Naive thymus-derived CD4-positive, alpha-beta T cell (primary cell): ENCODE measurements at regions of chr1 and their contacts with region 1.

Region 1: GRCh38 chr1:84143796-84144565 is at the start of gene PRKACB:
- DNase-seq: peak in 7 of 9 donors; percentile 59 to 79 (median 70)
- ATAC-seq: peak; percentile 94
- H3K4me3 ChIP-seq: peak within 1 kb of the TSS; percentile 71
- H3K4me3 Mint-ChIP-seq: peak within 1 kb of the TSS; percentile 88 to 100 (median 96)
- H3K27ac ChIP-seq: peak within 1 kb of the TSS; percentile 74
- H3K27ac Mint-ChIP-seq: peak within 1 kb of the TSS; percentile 97 to 100 (median 99)
- H3K4me1 ChIP-seq: peaks cover 27 to 33% of the 10 kb centered on the region in 2 donors
- H3K4me1 Mint-ChIP-seq: peaks cover 17 to 51% (median 39%) of the 10 kb centered on the region in 7 donors
- H3K27me3 ChIP-seq: no peaks in the 10 kb centered on the region
- H3K27me3 Mint-ChIP-seq: no peaks in the 10 kb centered on the region
- total RNA-seq, gene PRKACB: 71.1 to 176 (median 89.3) TPM

Region 2: DNA sequence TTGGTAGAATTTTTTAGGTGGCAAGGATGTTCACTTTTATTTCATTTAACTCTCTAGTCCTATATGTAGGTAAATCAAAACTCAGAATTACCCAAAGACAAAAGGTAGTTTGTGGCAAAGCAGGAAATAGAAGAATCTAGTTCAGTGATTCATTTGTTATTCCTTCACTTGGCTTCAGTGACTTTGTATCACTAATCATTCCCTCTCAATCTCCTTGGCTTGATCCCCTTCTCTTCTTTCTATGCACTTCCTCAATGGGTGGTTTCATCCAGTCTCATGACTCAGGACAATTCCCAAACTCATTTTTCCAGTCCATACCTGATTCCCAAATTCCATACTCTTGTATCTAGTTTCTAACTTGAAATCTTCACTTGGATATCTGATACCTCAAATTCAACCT is 65.0 kb after region 1 on chr1:
- CTCF ChIA-PET with region 1: interaction called, 3 read pairs
- POLR2A ChIA-PET with region 1: no interaction called
- intact Hi-C with region 1: loop called in 1 of 2 experiments (anchors 2 kb)
- DNase-seq: no peak
- ATAC-seq: no peak
- H3K4me3 ChIP-seq: no peak overlapping the region
- H3K4me3 Mint-ChIP-seq: no peak overlapping the region
- H3K27ac ChIP-seq: no peak overlapping the region
- H3K27ac Mint-ChIP-seq: peak overlapping the region in 6 of 9 donors; percentile 7 to 87 (median 19)
- H3K4me1 ChIP-seq: no peaks in the 10 kb centered on the region
- H3K4me1 Mint-ChIP-seq: peaks cover 4 to 55% (median 38%) of the 10 kb centered on the region in 7 donors
- H3K27me3 ChIP-seq: no peaks in the 10 kb centered on the region
- H3K27me3 Mint-ChIP-seq: no peaks in the 10 kb centered on the region

Region 3: GRCh38 chr1:84442256-84442655 is 298.3 kb after region 1 on chr1:
- CTCF ChIA-PET with region 1: interaction called, 167 read pairs
- POLR2A ChIA-PET with region 1: interaction called, 105 read pairs
- intact Hi-C with region 1: no loop called
- DNase-seq: peak in 7 of 9 donors; percentile 51 to 77 (median 66)
- ATAC-seq: peak; percentile 99
- H3K4me3 ChIP-seq: no peak overlapping the region
- H3K4me3 Mint-ChIP-seq: peak overlapping the region; percentile 14 to 66 (median 41)
- H3K27ac ChIP-seq: no peak overlapping the region
- H3K27ac Mint-ChIP-seq: peak overlapping the region in 5 of 9 donors; percentile 35 to 81 (median 72)
- H3K4me1 ChIP-seq: peaks cover 10 to 21% of the 10 kb centered on the region in 2 donors
- H3K4me1 Mint-ChIP-seq: peaks cover 5 to 24% (median 16%) of the 10 kb centered on the region in 7 donors
- H3K27me3 ChIP-seq: no peaks in the 10 kb centered on the region
- H3K27me3 Mint-ChIP-seq: peaks cover 0 to 16% (median 11%) of the 10 kb centered on the region in 5 donors

Region 4: DNA sequence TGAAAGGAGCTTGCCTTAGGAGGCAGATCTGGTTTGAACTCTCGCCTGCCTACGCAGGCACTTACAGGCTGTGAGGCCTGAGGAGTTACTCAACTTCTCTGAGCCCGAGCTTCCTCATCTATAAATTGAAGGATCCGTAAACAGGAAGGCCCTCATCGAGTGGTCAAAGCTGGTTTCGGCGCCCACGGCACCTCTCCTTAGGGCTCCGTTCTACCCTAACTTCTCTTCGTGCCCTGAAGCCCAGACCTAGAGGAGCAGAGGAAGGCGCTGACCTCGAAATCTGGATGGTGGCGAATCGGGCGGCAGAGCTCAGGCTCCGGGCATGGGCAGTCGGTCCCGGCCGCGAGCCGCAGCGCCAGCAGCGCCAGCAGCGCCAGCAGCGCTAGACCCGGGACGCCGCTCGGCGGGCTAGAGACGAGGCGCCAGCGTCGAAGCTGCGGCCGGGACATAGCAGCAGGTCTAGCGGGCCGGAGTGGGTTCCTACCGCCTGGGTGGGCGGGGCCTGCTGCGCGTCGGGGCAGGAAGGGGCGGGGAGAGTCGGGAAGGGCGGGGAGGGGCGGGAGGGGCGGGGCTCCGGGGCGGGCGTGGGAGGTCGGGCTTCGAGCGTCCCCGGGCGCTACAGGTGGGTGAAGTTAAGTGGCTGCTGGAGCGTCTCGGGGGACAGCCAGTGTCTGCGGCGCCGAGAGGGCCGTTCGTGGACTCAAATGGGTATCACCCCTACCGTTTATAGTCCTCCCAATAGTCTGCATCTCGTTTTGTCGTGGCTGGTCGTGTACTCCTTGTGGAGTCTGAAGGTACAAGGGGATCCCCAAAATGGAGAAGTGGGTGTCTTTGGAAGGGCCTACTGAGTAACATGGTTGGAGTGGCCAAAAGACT is 430.2 kb after region 1 on chr1 and contains the start of gene CTBS:
- CTCF ChIA-PET with region 1: interaction called, 8 read pairs
- POLR2A ChIA-PET with region 1: interaction called, 16 read pairs
- intact Hi-C with region 1: loop called (anchors 1 to 2 kb)
- DNase-seq: peak; percentile 69 to 84 (median 82)
- ATAC-seq: peak; percentile 96
- H3K4me3 ChIP-seq: peak within 1 kb of the TSS; percentile 77
- H3K4me3 Mint-ChIP-seq: peak within 1 kb of the TSS; percentile 97 to 99 (median 99)
- H3K27ac ChIP-seq: peak within 1 kb of the TSS; percentile 99
- H3K27ac Mint-ChIP-seq: peak within 1 kb of the TSS; percentile 98 to 100 (median 100)
- H3K4me1 ChIP-seq: peaks cover 9 to 13% of the 10 kb centered on the region in 2 donors
- H3K4me1 Mint-ChIP-seq: peaks cover 29 to 51% (median 40%) of the 10 kb centered on the region in 7 donors
- H3K27me3 ChIP-seq: no peaks in the 10 kb centered on the region
- H3K27me3 Mint-ChIP-seq: peaks cover 0 to 2% (median 0%) of the 10 kb centered on the region in 5 donors
- total RNA-seq, gene CTBS: 17.4 to 22.3 (median 19.0) TPM

Region 5: DNA sequence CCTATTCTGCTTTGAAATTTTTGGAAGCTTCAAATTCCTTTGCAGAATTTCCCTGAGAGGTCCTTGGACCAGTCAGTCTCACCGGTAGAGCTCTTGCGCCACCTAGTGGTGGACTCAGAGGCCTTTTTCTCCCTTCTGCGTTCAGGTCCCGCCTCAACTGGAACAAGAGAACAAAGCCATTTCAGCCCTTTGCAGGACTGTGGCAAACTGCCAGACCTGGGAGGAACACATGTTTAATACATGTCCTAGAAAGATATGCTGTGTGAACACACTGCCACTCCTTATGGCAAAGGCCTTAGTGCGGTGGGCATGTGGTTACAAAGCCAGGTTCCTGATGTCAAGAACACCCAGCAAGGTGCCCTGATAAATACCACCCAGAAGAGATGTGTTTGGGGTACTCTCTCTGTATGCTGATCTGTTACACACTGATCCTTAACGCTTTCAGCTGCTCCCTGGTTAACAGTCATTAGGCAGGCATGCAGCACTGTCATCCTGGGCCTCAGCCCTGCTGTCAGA is 628.5 kb after region 1 on chr1:
- CTCF ChIA-PET with region 1: interaction called, 5 read pairs
- POLR2A ChIA-PET with region 1: no interaction called
- intact Hi-C with region 1: loop called (anchors 1 kb)
- DNase-seq: peak; percentile 51 to 74 (median 64)
- ATAC-seq: peak; percentile 83
- H3K4me3 ChIP-seq: no peak overlapping the region
- H3K4me3 Mint-ChIP-seq: no peak overlapping the region
- H3K27ac ChIP-seq: no peak overlapping the region
- H3K27ac Mint-ChIP-seq: no peak overlapping the region
- H3K4me1 ChIP-seq: no peaks in the 10 kb centered on the region
- H3K4me1 Mint-ChIP-seq: peaks cover 0 to 4% (median 0%) of the 10 kb centered on the region in 7 donors
- H3K27me3 ChIP-seq: no peaks in the 10 kb centered on the region
- H3K27me3 Mint-ChIP-seq: peaks cover 5 to 31% (median 9%) of the 10 kb centered on the region in 5 donors